ENCODE measurements at regions of chr2 and their contacts with region 1.

Region 1: DNA sequence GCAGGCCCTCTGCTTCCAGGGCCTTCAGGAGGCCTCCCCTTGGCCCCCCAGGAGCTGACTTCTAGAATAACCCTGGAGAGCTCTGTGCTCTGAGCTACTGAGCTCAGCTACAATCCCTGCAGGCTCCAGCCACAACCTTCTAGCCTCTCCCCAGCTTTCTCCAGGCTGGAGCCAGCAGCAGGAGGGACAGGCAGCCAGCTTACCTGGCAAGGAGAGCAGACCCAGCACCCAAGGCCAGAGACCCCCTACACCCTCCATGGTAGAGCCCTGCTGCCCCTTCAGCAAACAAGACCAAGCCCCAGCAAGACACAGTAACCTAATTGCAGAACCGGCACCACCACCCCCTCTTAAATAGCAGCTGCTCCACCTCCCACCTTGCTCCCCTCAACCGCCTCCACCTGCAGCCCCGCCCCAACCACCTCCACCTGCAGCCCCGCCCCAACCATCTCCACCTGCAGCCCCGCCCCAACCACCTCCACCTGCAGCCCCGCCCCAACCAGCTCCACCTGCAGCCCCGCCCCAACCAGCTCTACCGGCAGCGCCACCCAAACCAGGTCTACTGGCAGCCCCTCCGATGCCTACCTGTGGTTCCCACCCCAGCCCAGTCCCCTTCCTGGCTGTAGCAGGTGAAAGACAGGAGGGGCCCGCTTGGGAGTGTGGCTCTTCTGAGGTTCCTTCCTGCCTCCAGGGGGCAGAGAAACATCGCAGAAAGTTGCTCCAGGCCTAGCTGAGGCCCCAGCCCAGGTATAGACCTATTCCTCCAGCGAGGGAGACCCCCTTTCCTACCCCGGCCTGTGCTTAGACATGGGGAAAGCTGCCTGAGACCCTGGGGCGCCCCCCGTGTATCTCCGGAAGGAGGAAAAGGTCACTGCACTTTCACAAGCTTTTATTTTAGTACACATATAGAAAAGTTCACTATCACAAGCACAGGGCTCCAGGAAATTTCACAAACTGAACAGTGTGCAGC is at the start of gene ASTL:
- DNase-seq: peak; percentile 78
- CTCF ChIP-seq: peak; percentile 77

Region 2: GRCh38 chr2:96180521-96180920 is 42.1 kb after region 1 on chr2:
- CTCF ChIA-PET with region 1: interaction called, 658 read pairs
- POLR2A ChIA-PET with region 1: interaction called, 57 read pairs
- DNase-seq: no peak
- CTCF ChIP-seq: no peak

Region 3: GRCh38 chr2:96208143-96209010 is 69.9 kb after region 1 on chr2 and contains the start of gene STARD7:
- CTCF ChIA-PET with region 1: interaction called, 23 read pairs
- POLR2A ChIA-PET with region 1: interaction called, 5 read pairs
- DNase-seq: peak; percentile 98
- CTCF ChIP-seq: no peak

Region 4: DNA sequence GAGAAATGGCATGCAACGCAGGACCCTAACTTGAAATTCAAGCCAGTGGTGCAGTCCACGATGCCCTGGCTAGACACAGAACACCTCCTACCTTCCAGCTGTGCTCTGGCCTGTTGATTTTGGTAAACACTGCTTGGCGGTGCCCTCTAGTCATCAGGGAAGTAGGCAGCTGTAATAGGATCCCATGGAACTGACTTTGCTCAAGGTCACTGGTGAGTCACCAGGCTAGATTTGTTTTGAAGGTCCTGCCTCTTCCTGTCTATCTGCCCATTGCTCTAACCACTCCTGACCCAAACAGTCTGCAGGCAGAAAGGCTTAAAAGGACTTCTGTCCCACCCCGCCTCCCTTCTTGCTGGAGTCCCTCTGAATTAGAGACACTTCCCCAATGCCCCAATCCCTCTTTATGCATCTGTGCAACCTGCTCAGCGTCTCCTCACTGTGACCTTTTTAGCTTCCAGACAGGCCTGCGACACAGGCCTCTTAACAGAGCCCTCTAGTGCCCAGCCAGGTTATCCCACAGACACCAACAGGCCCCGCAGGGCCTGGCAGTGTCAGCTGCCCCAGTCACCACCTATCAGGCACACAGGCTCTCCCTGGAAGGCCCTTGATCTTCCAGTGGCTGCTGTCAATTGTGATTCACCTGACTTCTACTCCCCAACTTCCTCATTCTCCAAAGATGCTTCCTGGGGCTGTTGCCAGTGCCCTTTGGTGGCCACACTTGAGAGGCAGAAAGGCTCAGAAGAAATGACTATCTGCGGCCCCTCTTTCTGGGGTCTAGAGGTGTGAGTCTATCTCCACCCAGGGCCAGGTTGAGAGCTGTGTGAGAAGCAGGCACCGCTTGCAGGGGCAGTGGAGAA is 122.2 kb after region 1 on chr2:
- CTCF ChIA-PET with region 1: interaction called, 25 read pairs
- POLR2A ChIA-PET with region 1: interaction called, 3 read pairs
- DNase-seq: peak; percentile 68
- CTCF ChIP-seq: peak; percentile 53

Measured in GM10248 (cell line).